Cardiac septum (tissue), 1 donor: ENCODE measurements at regions of chr5 and their contacts with region 1.

Region 1: GRCh38 chr5:74382987-74383593 is 257.4 kb downstream of the ENC1 start:
- DNase-seq: no peak

Region 2: GRCh38 chr5:74576941-74577456 is 193.9 kb after region 1 on chr5:
- intact Hi-C with region 1: loop called (anchors 10 kb)
- DNase-seq: no peak